ENCODE measurements at regions of chr19 and their contacts with region 1.

Region 1: DNA sequence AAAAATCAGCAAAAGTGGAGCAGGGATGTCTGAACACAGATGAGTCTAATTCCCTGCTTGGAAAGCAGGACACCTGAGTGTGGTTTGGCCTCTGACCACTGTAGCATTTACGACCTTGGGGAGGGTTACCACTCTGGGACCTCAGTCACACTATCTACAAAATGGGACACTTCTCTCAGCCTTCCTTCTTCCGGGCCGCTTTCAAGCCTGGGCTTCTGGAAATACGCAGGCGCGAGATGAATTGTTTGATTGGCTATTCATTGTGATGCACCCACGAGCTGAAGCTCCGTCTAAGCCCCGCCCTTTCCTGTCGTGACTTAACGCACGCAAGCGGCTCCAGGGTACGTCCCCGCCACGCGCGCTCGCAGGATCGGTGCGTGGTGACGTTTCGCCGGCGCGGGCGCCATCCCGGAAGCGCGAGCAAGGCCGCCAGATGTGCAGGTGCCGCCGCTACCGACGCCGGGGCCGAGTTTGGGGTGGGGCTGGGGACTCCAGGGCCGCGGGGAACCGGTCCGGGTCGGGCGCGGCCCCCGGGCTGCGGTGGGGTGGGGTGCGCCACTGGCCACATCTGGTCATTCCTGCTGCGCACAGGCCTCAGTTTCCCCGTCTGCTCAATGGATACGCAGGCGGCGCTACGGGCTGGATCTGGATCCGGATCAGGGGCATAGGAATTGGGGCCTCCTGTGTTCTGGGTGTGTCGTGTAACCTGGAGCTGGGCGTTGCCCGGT is at the start of gene KXD1:
- DNase-seq: peak; percentile 83 to 97
- ATAC-seq: peak; percentile 98 to 99
- H3K4me3 ChIP-seq: peak within 1 kb of the TSS; percentile 81
- H3K27ac ChIP-seq: peak within 1 kb of the TSS; percentile 84 to 96
- H3K4me1 ChIP-seq: peaks cover 11% of the 10 kb centered on the region; the same call in 2 of the 3 replicates
- CTCF ChIP-seq: no peak
- EP300 ChIP-seq: no peak
- POLR2A ChIP-seq: peak; percentile 71
- RAD21 ChIP-seq: no peak
- polyA plus RNA-seq, gene KXD1: 62.8 and 73.6 TPM in 2 replicates

Region 2: GRCh38 chr19:18542936-18543815 is 14.5 kb before region 1 on chr19 and contains the start of gene FKBP8:
- CTCF ChIA-PET with region 1: interaction called, 4 read pairs
- POLR2A ChIA-PET with region 1: interaction called, 12 read pairs
- DNase-seq: peak; percentile 83 to 84
- ATAC-seq: peak; percentile 97 to 98
- H3K4me3 ChIP-seq: peak within 1 kb of the TSS; percentile 81
- H3K27ac ChIP-seq: peak within 1 kb of the TSS; percentile 97 to 100
- H3K4me1 ChIP-seq: peaks cover 11% of the 10 kb centered on the region; the same call in 1 of the 3 replicates
- CTCF ChIP-seq: no peak
- EP300 ChIP-seq: no peak
- POLR2A ChIP-seq: no peak
- RAD21 ChIP-seq: no peak
- polyA plus RNA-seq, gene FKBP8: 53.3 and 56.1 TPM in 2 replicates

Region 3: DNA sequence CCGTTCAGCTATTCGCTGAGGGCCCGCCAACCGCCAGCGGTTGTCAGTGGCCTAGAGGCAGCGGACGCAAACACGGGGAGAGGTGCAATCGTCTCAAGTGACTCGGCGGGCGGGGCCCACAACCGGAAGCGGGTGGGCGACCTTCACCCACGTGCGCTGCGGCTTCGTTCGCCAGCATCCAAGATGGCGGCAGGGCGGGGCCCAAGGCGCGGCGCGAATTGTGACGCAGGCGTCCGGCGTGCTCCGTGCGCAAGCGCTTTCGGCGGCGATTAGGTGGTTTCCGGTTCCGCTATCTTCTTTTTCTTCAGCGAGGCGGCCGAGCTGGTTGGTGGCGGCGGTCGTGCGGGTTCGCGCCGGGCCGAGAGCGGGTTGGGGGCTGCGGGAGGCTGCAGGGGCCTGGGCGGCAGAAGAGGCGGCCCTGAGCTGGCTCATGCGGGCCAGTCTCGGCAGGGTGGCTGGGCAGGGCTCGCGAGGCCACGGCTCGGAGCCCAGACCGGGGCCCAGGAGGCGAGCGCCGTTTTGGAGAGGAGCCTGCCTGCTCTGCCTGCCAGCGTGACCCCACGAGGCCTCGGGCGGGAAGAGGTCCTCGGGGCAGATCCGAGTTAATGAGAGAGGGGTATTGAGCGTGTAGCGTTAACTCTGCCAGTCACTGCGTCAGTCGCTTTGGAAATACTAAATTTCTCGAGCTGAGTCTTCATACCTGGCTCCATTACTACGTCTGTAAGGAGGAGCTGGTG is 14.1 kb after region 1 on chr19 and contains the start of gene UBA52:
- CTCF ChIA-PET with region 1: interaction called, 7 read pairs
- POLR2A ChIA-PET with region 1: interaction called, 13 read pairs
- DNase-seq: peak; percentile 69 to 97
- ATAC-seq: peak; percentile 96 to 98
- H3K4me3 ChIP-seq: peak within 1 kb of the TSS; percentile 87
- H3K27ac ChIP-seq: peak within 1 kb of the TSS; percentile 86 to 95
- H3K4me1 ChIP-seq: peaks cover 19% of the 10 kb centered on the region
- CTCF ChIP-seq: no peak
- EP300 ChIP-seq: no peak
- POLR2A ChIP-seq: peak; percentile 72
- RAD21 ChIP-seq: no peak
- polyA plus RNA-seq, gene UBA52: 888 and 1,266 TPM in 2 replicates

Region 4: GRCh38 chr19:18603255-18603957 is 45.8 kb after region 1 on chr19:
- CTCF ChIA-PET with region 1: no interaction called
- POLR2A ChIA-PET with region 1: no interaction called
- DNase-seq: peak in 1 of 2 experiments; percentile 38
- ATAC-seq: peak; percentile 65 to 85; a peak in 5 of 6 replicates
- H3K4me3 ChIP-seq: no peak overlapping the region
- H3K27ac ChIP-seq: no peak overlapping the region; a peak in 1 of 6 replicates
- H3K4me1 ChIP-seq: peaks cover 14% of the 10 kb centered on the region; the same call in 2 of the 3 replicates
- CTCF ChIP-seq: peak; percentile 10; the same call in 1 of the 3 replicates
- EP300 ChIP-seq: no peak
- POLR2A ChIP-seq: no peak
- RAD21 ChIP-seq: no peak

Measured in A549 (cell line).